ENCODE measurements at regions of chr20 and their contacts with region 1.

Region 1: GRCh38 chr20:39874049-39874888 is 814.8 kb downstream of the MAFB start:
- DNase-seq: peak; percentile 55
- ATAC-seq: peak; percentile 94
- H3K4me3 ChIP-seq: no peak overlapping the region
- H3K27ac ChIP-seq: no peak overlapping the region
- H3K4me1 ChIP-seq: peaks cover 10% of the 10 kb centered on the region; the same call in 1 of the 2 replicates
- H3K27me3 ChIP-seq: no peaks in the 10 kb centered on the region
- CTCF ChIP-seq: peak; percentile 61
- EP300 ChIP-seq: no peak
- POLR2A ChIP-seq: no peak
- RAD21 ChIP-seq: 0 out of 2 replicates have a peak, but pooled peaks have one; percentile 26

Region 2: GRCh38 chr20:39112178-39112743 is 762.0 kb before region 1 on chr20:
- CTCF ChIA-PET with region 1: no interaction called
- POLR2A ChIA-PET with region 1: no interaction called
- in situ Hi-C with region 1: loop called (anchors 10 kb)
- intact Hi-C with region 1: no loop called
- DNase-seq: peak; percentile 65
- ATAC-seq: peak; percentile 97
- H3K4me3 ChIP-seq: peak overlapping the region in 1 of 3 experiments; percentile 6; a peak in 1 of 6 replicates
- H3K27ac ChIP-seq: no peak overlapping the region
- H3K4me1 ChIP-seq: peaks cover 15% of the 10 kb centered on the region; the same call in 1 of the 2 replicates
- H3K27me3 ChIP-seq: peaks cover 4 to 23% of the 10 kb centered on the region in 2 experiments; a peak in 3 of 5 replicates
- CTCF ChIP-seq: peak; percentile 96
- EP300 ChIP-seq: no peak
- POLR2A ChIP-seq: no peak
- RAD21 ChIP-seq: peak; percentile 90

Region 3: DNA sequence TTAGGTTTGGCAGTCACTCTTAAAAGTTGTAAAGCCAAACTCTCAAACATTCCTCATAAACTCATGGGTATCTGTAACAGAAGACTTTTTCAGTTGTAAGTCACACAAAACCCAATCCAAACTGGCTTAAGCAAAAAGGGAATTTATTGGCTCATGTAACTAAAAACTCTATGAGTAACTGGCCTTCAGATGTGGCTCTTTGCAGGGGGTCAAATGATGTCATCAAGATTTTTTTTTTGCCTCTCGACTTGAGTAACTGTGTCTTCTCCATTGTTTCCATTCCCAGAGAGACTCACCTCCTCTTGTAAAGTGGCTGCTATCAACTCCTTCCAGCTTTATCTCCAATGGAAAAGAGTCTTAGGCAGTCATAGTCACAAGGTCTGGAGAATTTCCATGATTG is 267.1 kb before region 1 on chr20:
- CTCF ChIA-PET with region 1: no interaction called
- POLR2A ChIA-PET with region 1: no interaction called
- in situ Hi-C with region 1: no loop called
- intact Hi-C with region 1: no loop called
- DNase-seq: no peak
- ATAC-seq: no peak
- H3K4me3 ChIP-seq: no peak overlapping the region
- H3K27ac ChIP-seq: no peak overlapping the region
- H3K4me1 ChIP-seq: no peaks in the 10 kb centered on the region
- H3K27me3 ChIP-seq: no peaks in the 10 kb centered on the region
- CTCF ChIP-seq: no peak
- EP300 ChIP-seq: no peak
- POLR2A ChIP-seq: no peak
- RAD21 ChIP-seq: no peak